ENCODE measurements at regions of chr16 and their contacts with region 1.

Region 1: GRCh38 chr16:106623-107324 is 28.7 kb downstream of the MPG start:
- DNase-seq: peak; percentile 72
- ATAC-seq: peak; percentile 81
- H3K4me3 Mint-ChIP-seq: no peak overlapping the region
- H3K27ac Mint-ChIP-seq: no peak overlapping the region
- H3K4me1 Mint-ChIP-seq: no peaks in the 10 kb centered on the region
- H3K27me3 Mint-ChIP-seq: no peaks in the 10 kb centered on the region

Region 2: GRCh38 chr16:35011-35677 is 71.6 kb before region 1 on chr16:
- CTCF ChIA-PET with region 1: no interaction called
- POLR2A ChIA-PET with region 1: no interaction called
- intact Hi-C with region 1: no loop called
- DNase-seq: no peak
- ATAC-seq: no peak
- H3K4me3 Mint-ChIP-seq: no peak overlapping the region
- H3K27ac Mint-ChIP-seq: no peak overlapping the region
- H3K4me1 Mint-ChIP-seq: peaks cover 17% of the 10 kb centered on the region
- H3K27me3 Mint-ChIP-seq: no peaks in the 10 kb centered on the region

Region 3: DNA sequence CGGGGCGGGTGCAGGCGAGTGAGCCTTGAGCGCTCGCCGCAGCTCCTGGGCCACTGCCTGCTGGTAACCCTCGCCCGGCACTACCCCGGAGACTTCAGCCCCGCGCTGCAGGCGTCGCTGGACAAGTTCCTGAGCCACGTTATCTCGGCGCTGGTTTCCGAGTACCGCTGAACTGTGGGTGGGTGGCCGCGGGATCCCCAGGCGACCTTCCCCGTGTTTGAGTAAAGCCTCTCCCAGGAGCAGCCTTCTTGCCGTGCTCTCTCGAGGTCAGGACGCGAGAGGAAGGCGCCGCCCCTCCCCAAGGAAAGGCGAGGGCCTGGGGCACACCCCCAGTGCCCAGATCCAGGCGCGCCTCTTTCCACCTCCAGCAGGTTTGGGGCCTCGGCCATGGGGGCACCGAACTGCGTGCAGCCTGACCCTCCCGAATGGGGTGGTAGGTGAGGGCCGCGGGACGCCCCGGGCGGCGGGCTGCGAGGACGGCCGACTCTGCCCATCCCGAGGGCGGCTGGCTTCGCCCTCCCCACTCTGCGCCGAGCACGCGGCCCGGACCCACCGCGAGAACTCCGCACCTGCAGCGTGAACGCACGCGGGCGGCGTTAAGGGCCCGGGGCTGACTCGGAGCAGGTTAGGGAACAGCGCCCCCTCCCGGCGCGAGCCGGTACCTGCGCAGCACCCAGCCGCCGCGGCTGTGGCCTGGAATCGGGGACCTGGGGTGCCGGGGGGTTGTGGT is 74.3 kb after region 1 on chr16:
- CTCF ChIA-PET with region 1: interaction called, 9 read pairs
- POLR2A ChIA-PET with region 1: no interaction called
- intact Hi-C with region 1: loop called (anchors 1 kb)
- DNase-seq: peak; percentile 94
- ATAC-seq: peak; percentile 88
- H3K4me3 Mint-ChIP-seq: peak overlapping the region; percentile 39
- H3K27ac Mint-ChIP-seq: no peak overlapping the region
- H3K4me1 Mint-ChIP-seq: peaks cover 3% of the 10 kb centered on the region
- H3K27me3 Mint-ChIP-seq: peaks cover 21% of the 10 kb centered on the region

Region 4: DNA sequence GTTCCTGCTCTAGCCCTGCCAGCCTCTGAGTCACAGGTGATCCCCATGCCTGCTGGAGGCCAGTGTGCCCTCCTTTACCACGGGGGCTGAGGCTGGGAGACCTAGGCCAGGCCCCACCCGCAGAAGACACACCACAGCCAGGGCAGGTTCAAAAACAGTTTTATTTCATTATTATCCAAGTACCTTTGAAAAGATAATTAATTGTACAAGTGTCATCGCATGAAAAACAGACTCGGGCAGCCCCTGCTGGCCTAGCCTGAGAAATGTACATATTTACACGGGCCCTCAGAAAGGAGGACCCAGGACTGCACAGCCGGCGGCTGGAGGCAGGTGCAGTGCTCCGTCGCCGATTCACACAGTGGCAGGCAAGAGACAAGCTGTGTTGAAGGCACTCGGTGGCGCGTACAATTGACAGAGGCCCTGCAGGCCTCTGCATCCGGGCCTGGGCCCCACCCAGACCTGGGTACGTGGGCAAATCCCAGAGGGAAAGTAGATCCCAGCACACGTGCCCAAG is 180.6 kb after region 1 on chr16:
- CTCF ChIA-PET with region 1: no interaction called
- POLR2A ChIA-PET with region 1: no interaction called
- intact Hi-C with region 1: no loop called
- DNase-seq: no peak
- ATAC-seq: no peak
- H3K4me3 Mint-ChIP-seq: no peak overlapping the region
- H3K27ac Mint-ChIP-seq: no peak overlapping the region
- H3K4me1 Mint-ChIP-seq: no peaks in the 10 kb centered on the region
- H3K27me3 Mint-ChIP-seq: no peaks in the 10 kb centered on the region

Region 5: GRCh38 chr16:361872-362701 is 255.3 kb after region 1 on chr16:
- CTCF ChIA-PET with region 1: interaction called, 12 read pairs
- POLR2A ChIA-PET with region 1: interaction called, 4 read pairs
- intact Hi-C with region 1: loop called (anchors 1 to 2 kb)
- DNase-seq: peak; percentile 87
- ATAC-seq: peak; percentile 96
- H3K4me3 Mint-ChIP-seq: no peak overlapping the region
- H3K27ac Mint-ChIP-seq: no peak overlapping the region
- H3K4me1 Mint-ChIP-seq: peaks cover 5% of the 10 kb centered on the region
- H3K27me3 Mint-ChIP-seq: peaks cover 5% of the 10 kb centered on the region

Region 6: DNA sequence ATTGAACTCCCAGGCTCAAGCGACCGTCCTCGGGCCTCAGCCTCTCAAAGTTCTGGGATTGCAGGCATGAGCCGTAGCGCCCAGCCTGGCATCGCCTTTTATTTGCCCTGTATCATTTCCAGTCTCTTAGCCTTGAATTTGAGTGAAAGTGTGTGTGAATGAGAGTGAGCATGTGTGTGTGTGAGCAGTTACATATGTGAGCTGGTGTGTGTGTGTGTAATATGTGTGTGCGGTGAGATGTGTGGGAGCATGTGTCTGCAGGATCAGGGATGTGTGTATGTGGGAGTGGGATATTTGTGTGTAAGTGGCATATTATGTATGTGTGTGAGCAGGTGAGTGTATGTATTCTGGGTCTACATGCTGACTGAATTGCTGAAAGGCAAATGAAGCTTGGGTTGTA is 324.1 kb after region 1 on chr16:
- CTCF ChIA-PET with region 1: no interaction called
- POLR2A ChIA-PET with region 1: no interaction called
- intact Hi-C with region 1: no loop called
- DNase-seq: no peak
- ATAC-seq: no peak
- H3K4me3 Mint-ChIP-seq: no peak overlapping the region
- H3K27ac Mint-ChIP-seq: no peak overlapping the region
- H3K4me1 Mint-ChIP-seq: peaks cover 22% of the 10 kb centered on the region
- H3K27me3 Mint-ChIP-seq: no peaks in the 10 kb centered on the region